Pancreas (tissue), 10 donors: ENCODE measurements at regions of chr6 and their contacts with region 1.

Region 1: DNA sequence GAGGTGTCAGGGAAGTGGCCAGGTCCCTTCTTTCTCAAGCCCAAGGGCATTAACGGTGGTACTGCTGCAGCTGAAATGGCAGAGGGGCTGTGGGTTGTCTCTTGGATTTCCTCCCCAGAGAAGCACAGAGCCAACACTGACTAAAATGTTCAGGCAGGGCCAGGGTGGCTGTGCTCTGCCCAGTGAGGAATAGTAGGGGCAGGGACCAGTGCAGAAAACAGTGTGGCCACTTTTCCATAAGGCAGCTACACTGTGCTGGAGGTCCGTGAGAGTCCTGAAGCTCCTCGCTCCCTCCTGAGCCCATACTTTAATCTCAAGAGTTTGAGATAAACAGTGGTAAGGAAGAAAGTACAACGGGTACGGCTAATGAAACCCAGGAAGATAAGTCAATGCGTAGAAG is 4.5 kb downstream of the LPA start:
- DNase-seq: no peak
- ATAC-seq: no peak
- H3K4me3 ChIP-seq: no peak overlapping the region
- H3K27ac ChIP-seq: no peak overlapping the region
- H3K4me1 ChIP-seq: no peaks in the 10 kb centered on the region
- H3K27me3 ChIP-seq: no peaks in the 10 kb centered on the region
- CTCF ChIP-seq: no peak

Region 2: GRCh38 chr6:160595838-160596832 is 63.4 kb before region 1 on chr6:
- intact Hi-C with region 1: loop called in 1 of 3 experiments (anchors 10 kb)
- DNase-seq: no peak
- ATAC-seq: no peak
- H3K4me3 ChIP-seq: no peak overlapping the region
- H3K27ac ChIP-seq: no peak overlapping the region
- H3K4me1 ChIP-seq: no peaks in the 10 kb centered on the region
- H3K27me3 ChIP-seq: no peaks in the 10 kb centered on the region
- CTCF ChIP-seq: no peak

Region 3: DNA sequence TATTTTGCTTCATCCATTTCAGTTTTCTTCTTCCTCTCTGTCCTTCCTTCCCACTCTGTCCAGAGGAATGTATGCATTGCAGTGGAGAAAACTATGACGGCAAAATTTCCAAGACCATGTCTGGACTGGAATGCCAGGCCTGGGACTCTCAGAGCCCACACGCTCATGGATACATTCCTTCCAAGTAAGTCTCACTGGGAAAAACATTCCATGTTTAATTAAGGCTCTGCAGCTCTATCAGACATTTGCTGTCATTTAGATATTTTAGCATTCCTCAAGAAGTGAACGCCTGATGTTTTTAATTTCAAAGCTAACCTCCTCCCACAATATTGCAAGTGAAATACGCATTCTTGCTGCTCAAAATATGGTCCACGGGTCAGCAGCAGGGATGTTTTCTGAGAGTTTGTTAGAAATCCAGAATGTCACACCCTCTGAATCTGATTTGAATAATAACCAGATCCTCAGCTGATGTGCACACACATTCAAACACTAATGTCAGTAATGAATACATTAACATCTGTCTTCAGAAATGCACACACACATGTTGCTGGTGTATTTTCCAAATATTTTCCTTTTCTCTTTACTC is 55.3 kb after region 1 on chr6:
- intact Hi-C with region 1: no loop called
- DNase-seq: no peak
- ATAC-seq: no peak
- H3K4me3 ChIP-seq: no peak overlapping the region
- H3K27ac ChIP-seq: no peak overlapping the region
- H3K4me1 ChIP-seq: no peaks in the 10 kb centered on the region
- H3K27me3 ChIP-seq: no peaks in the 10 kb centered on the region
- CTCF ChIP-seq: no peak